Activated CD4-positive, alpha-beta memory T cell treated with anti-CD3 and anti-CD28 coated beads for 36 hours (primary cell): ENCODE measurements at regions of chr15 and their contacts with region 1.

Region 1: GRCh38 chr15:40338041-40338657 is 2.6 kb downstream of the CCDC9B start:
- DNase-seq: peak; percentile 84
- H3K4me3 Mint-ChIP-seq: peak overlapping the region; percentile 26
- H3K27ac Mint-ChIP-seq: peak overlapping the region; percentile 5
- H3K4me1 Mint-ChIP-seq: peaks cover 11% of the 10 kb centered on the region
- H3K27me3 Mint-ChIP-seq: no peaks in the 10 kb centered on the region

Region 2: GRCh38 chr15:40217159-40217824 is 120.9 kb before region 1 on chr15:
- CTCF ChIA-PET with region 1: interaction called, 13 read pairs
- POLR2A ChIA-PET with region 1: no interaction called
- intact Hi-C with region 1: no loop called
- DNase-seq: peak; percentile 40
- H3K4me3 Mint-ChIP-seq: no peak overlapping the region
- H3K27ac Mint-ChIP-seq: no peak overlapping the region
- H3K4me1 Mint-ChIP-seq: no peaks in the 10 kb centered on the region
- H3K27me3 Mint-ChIP-seq: no peaks in the 10 kb centered on the region

Region 3: DNA sequence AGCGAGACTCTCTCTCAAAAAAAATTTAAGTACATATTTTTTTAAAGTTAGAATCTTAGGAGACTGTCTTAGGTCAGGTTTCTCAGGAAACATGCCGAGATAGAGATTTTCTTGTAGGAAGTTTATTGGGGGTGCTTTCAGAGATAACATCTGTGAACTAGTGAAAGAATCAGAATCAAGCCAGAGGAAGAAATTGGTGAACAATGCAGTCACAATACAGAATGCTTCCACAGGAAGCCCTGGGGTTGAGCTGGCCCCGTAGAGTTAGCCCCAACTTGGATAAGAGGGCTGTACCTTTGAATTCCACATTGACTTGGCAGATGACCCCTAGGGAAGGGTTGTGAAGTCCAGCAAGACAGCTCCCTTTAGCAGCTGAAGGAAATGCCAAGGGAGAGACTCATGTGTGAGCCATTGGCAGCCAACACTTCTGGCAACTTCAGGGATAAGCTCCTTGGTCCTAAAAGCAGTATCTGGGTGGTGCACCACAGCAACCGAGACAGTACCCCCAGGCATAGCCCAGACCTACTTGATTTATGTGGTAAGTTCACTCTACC is 23.3 kb before region 1 on chr15:
- CTCF ChIA-PET with region 1: interaction called, 106 read pairs
- POLR2A ChIA-PET with region 1: no interaction called
- intact Hi-C with region 1: no loop called
- DNase-seq: no peak
- H3K4me3 Mint-ChIP-seq: no peak overlapping the region
- H3K27ac Mint-ChIP-seq: no peak overlapping the region
- H3K4me1 Mint-ChIP-seq: peaks cover 12% of the 10 kb centered on the region
- H3K27me3 Mint-ChIP-seq: peaks cover 3% of the 10 kb centered on the region

Region 4: GRCh38 chr15:40323239-40323952 is 14.8 kb before region 1 on chr15 and contains the start of gene INAFM2:
- CTCF ChIA-PET with region 1: interaction called, 111 read pairs
- POLR2A ChIA-PET with region 1: interaction called, 5 read pairs
- intact Hi-C with region 1: loop called (anchors 1 kb)
- DNase-seq: peak; percentile 88
- H3K4me3 Mint-ChIP-seq: peak within 1 kb of the TSS; percentile 65
- H3K27ac Mint-ChIP-seq: no peak within 1 kb of the TSS
- H3K4me1 Mint-ChIP-seq: peaks cover 18% of the 10 kb centered on the region
- H3K27me3 Mint-ChIP-seq: no peaks in the 10 kb centered on the region
- total RNA-seq, gene INAFM2: 6.7 to 7.4 TPM

Region 5: GRCh38 chr15:40352281-40352901 is 14.2 kb after region 1 on chr15:
- CTCF ChIA-PET with region 1: interaction called, 26 read pairs
- POLR2A ChIA-PET with region 1: no interaction called
- intact Hi-C with region 1: no loop called
- DNase-seq: no peak
- H3K4me3 Mint-ChIP-seq: no peak overlapping the region
- H3K27ac Mint-ChIP-seq: no peak overlapping the region
- H3K4me1 Mint-ChIP-seq: no peaks in the 10 kb centered on the region
- H3K27me3 Mint-ChIP-seq: no peaks in the 10 kb centered on the region

Region 6: GRCh38 chr15:40357723-40358470 is 19.7 kb after region 1 on chr15 and contains the start of gene DISP2:
- CTCF ChIA-PET with region 1: interaction called, 26 read pairs
- POLR2A ChIA-PET with region 1: no interaction called
- intact Hi-C with region 1: no loop called
- DNase-seq: peak; percentile 94
- H3K4me3 Mint-ChIP-seq: peak within 1 kb of the TSS; percentile 74
- H3K27ac Mint-ChIP-seq: no peak within 1 kb of the TSS
- H3K4me1 Mint-ChIP-seq: peaks cover 5% of the 10 kb centered on the region
- H3K27me3 Mint-ChIP-seq: no peaks in the 10 kb centered on the region
- total RNA-seq, gene DISP2: 0.02 to 0.05 TPM

Region 7: GRCh38 chr15:40421246-40422157 is 83.4 kb after region 1 on chr15:
- CTCF ChIA-PET with region 1: interaction called, 216 read pairs
- POLR2A ChIA-PET with region 1: no interaction called
- intact Hi-C with region 1: no loop called
- DNase-seq: peak; percentile 87
- H3K4me3 Mint-ChIP-seq: no peak overlapping the region
- H3K27ac Mint-ChIP-seq: no peak overlapping the region
- H3K4me1 Mint-ChIP-seq: no peaks in the 10 kb centered on the region
- H3K27me3 Mint-ChIP-seq: no peaks in the 10 kb centered on the region